Caco-2 (cell line): ENCODE measurements at regions of chr6 and their contacts with region 1.

Region 1: GRCh38 chr6:155174576-155175211 is 89.1 kb upstream of the CLDN20 start:
- DNase-seq: peak; percentile 65 to 72
- H3K4me3 ChIP-seq: no peak overlapping the region
- H3K4me3 Mint-ChIP-seq: no peak overlapping the region
- H3K27ac Mint-ChIP-seq: no peak overlapping the region
- H3K4me1 ChIP-seq: no peaks in the 10 kb centered on the region
- H3K4me1 Mint-ChIP-seq: peaks cover 7% of the 10 kb centered on the region
- H3K27me3 ChIP-seq: no peaks in the 10 kb centered on the region
- H3K27me3 Mint-ChIP-seq: no peaks in the 10 kb centered on the region
- CTCF ChIP-seq: peak; percentile 54 to 58

Region 2: GRCh38 chr6:154868143-154868594 is 306.5 kb before region 1 on chr6:
- CTCF ChIA-PET with region 1: interaction called, 8 read pairs
- POLR2A ChIA-PET with region 1: no interaction called
- intact Hi-C with region 1: loop called (anchors 1 kb)
- DNase-seq: peak in 1 of 2 experiments; percentile 46
- H3K4me3 ChIP-seq: no peak overlapping the region
- H3K4me3 Mint-ChIP-seq: no peak overlapping the region
- H3K27ac Mint-ChIP-seq: no peak overlapping the region
- H3K4me1 ChIP-seq: peaks cover 8% of the 10 kb centered on the region
- H3K4me1 Mint-ChIP-seq: peaks cover 10% of the 10 kb centered on the region
- H3K27me3 ChIP-seq: no peaks in the 10 kb centered on the region
- H3K27me3 Mint-ChIP-seq: no peaks in the 10 kb centered on the region
- CTCF ChIP-seq: peak; percentile 66 to 75

Region 3: DNA sequence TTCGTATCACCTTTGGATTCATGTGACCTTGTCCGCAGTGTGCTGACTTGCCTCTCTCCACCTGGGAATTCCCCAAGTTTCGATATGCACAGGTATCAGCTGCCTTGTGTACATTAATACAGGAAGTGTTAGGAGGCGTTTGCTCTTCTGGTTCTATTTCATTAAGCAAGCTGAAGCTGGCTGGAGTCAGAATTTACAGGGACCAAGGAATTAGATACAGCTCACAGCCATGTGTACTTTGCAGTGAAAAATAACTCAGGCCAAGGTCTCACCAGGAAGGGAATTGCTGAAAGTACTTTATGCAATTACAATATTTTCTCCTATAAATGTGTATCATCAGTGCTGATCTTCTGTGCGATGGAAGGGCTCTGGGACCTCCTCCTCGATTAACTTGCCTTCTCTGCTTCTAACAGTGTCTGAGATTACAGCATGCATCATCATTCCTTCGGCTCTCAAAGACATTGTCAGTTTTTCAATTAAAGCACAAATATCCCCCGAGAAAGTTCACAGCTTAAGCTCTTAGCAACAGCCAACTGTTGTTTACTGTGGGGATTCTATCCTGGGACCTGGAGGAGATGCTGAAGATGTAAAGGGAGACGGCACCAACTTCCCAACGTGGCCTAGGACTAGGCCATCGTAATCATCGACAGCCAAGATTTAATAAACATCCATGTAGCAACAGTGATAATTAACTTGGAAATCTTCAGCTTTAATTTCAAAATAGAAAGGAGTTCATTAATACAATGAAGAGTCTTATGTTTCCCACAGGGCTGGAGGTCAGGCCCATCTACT is 193.4 kb before region 1 on chr6:
- CTCF ChIA-PET with region 1: no interaction called
- POLR2A ChIA-PET with region 1: no interaction called
- intact Hi-C with region 1: loop called (anchors 1 kb)
- DNase-seq: no peak
- H3K4me3 ChIP-seq: no peak overlapping the region
- H3K4me3 Mint-ChIP-seq: no peak overlapping the region
- H3K27ac Mint-ChIP-seq: peak overlapping the region; percentile 64
- H3K4me1 ChIP-seq: peaks cover 10% of the 10 kb centered on the region
- H3K4me1 Mint-ChIP-seq: peaks cover 9% of the 10 kb centered on the region
- H3K27me3 ChIP-seq: no peaks in the 10 kb centered on the region
- H3K27me3 Mint-ChIP-seq: no peaks in the 10 kb centered on the region
- CTCF ChIP-seq: no peak

Region 4: DNA sequence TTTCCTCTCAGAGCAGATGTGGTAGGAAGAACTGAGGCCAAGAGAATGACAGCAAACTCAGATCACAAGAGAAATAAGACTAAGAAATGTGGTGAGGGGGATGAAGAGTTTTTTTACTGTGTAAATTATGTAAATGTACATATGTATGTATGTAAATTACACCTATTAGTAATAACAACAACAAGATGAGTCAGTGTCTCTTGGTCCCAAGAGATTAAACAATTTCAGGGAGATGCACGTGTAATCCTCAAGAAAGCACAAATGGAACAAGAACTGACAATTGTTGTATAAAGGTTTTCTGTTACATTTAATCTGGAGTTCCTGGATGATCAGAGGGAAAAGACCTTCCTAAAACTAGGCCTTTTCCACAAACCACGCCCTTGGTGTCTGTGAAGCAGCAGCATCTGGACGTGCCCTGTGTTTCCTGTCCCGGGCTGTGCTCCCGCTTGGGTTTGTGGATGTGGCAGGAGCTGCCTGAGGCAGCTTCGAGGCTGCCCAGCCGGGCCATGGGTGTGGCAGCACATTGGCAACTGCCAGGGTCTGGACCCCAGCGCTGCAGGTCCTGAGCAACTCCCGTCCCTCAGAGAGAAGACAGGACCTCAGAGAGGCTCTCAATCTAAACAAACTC is 90.1 kb after region 1 on chr6:
- CTCF ChIA-PET with region 1: interaction called, 3 read pairs
- POLR2A ChIA-PET with region 1: no interaction called
- intact Hi-C with region 1: loop called (anchors 5 kb)
- DNase-seq: no peak
- H3K4me3 ChIP-seq: no peak overlapping the region
- H3K4me3 Mint-ChIP-seq: no peak overlapping the region
- H3K27ac Mint-ChIP-seq: no peak overlapping the region
- H3K4me1 ChIP-seq: peaks cover 5% of the 10 kb centered on the region; the same call in 1 of the 2 replicates
- H3K4me1 Mint-ChIP-seq: no peaks in the 10 kb centered on the region
- H3K27me3 ChIP-seq: no peaks in the 10 kb centered on the region
- H3K27me3 Mint-ChIP-seq: no peaks in the 10 kb centered on the region
- CTCF ChIP-seq: no peak

Region 5: DNA sequence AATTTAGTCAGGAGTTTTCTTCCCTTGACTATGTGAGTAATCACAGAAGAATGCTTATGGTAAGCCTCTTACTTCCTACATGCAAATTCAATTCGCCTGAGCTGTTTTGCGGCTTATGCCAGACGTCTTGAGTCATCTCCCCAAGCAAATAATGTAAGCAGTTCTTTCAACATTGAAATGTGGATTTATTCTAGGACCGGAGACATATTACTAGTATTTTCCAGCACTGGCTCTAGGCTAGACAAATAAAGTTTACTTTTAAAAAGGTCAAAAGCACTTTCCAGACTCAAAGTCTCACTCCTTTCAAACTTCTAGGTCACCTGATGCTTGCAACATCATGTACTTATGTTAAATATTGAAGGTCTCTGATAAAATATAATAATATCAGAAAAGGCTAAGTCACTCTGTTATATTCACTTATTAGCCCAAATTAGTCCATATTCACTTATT is 319.0 kb after region 1 on chr6:
- CTCF ChIA-PET with region 1: no interaction called
- POLR2A ChIA-PET with region 1: no interaction called
- intact Hi-C with region 1: loop called (anchors 1 kb)
- DNase-seq: peak; percentile 40 to 48
- H3K4me3 ChIP-seq: no peak overlapping the region
- H3K4me3 Mint-ChIP-seq: no peak overlapping the region
- H3K27ac Mint-ChIP-seq: peak overlapping the region; percentile 11
- H3K4me1 ChIP-seq: peaks cover 24% of the 10 kb centered on the region
- H3K4me1 Mint-ChIP-seq: peaks cover 20% of the 10 kb centered on the region
- H3K27me3 ChIP-seq: no peaks in the 10 kb centered on the region
- H3K27me3 Mint-ChIP-seq: no peaks in the 10 kb centered on the region
- CTCF ChIP-seq: no peak